A549 (cell line): ENCODE measurements at regions of chr7 and their contacts with region 1.

Region 1: DNA sequence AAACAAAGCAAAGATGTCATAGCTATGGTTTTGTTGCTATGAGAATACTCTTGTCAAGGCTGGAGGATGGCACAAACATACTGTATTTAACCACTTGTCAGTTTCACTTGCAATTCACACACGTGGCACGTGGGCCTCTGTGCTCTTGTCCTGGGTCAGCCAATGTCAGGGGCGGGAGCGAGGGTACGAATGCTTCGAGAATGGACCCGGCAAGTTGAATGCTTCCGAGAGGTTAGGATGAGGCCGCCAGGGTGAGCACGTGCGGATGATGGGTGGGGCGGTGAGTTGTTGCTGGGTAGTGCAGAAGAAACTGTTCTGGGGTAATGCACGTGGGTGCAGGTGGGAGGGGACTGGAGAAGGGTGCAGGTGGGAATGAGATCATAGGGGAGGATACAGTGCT is 10.4 kb upstream of the OCM2 start:
- DNase-seq: no peak
- ATAC-seq: no peak
- H3K4me3 ChIP-seq: no peak overlapping the region
- H3K27ac ChIP-seq: no peak overlapping the region
- H3K4me1 ChIP-seq: no peaks in the 10 kb centered on the region
- CTCF ChIP-seq: no peak
- EP300 ChIP-seq: no peak
- POLR2A ChIP-seq: no peak
- RAD21 ChIP-seq: no peak

Region 2: GRCh38 chr7:97971990-97972943 is 28.1 kb before region 1 on chr7:
- CTCF ChIA-PET with region 1: no interaction called
- POLR2A ChIA-PET with region 1: no interaction called
- DNase-seq: peak; percentile 85 to 90
- ATAC-seq: peak; percentile 98 to 99
- H3K4me3 ChIP-seq: peak overlapping the region; percentile 93
- H3K27ac ChIP-seq: peak overlapping the region; percentile 93 to 96
- H3K4me1 ChIP-seq: peaks cover 8% of the 10 kb centered on the region; the same call in 1 of the 3 replicates
- CTCF ChIP-seq: peak; percentile 37
- EP300 ChIP-seq: no peak
- POLR2A ChIP-seq: peak; percentile 59
- RAD21 ChIP-seq: no peak

Region 3: GRCh38 chr7:98014352-98014751 is 14.0 kb after region 1 on chr7:
- CTCF ChIA-PET with region 1: interaction called, 14 read pairs
- POLR2A ChIA-PET with region 1: no interaction called
- DNase-seq: no peak
- ATAC-seq: peak; percentile 27 to 63; a peak in 3 of 6 replicates
- H3K4me3 ChIP-seq: no peak overlapping the region
- H3K27ac ChIP-seq: no peak overlapping the region
- H3K4me1 ChIP-seq: no peaks in the 10 kb centered on the region
- CTCF ChIP-seq: no peak
- EP300 ChIP-seq: no peak
- POLR2A ChIP-seq: no peak
- RAD21 ChIP-seq: 0 out of 5 replicates have a peak, but pooled peaks of 1 of the 2 experiments have one; percentile 24

Region 4: GRCh38 chr7:98034081-98035035 is 34.0 kb after region 1 on chr7:
- CTCF ChIA-PET with region 1: no interaction called
- POLR2A ChIA-PET with region 1: no interaction called
- DNase-seq: no peak
- ATAC-seq: no peak
- H3K4me3 ChIP-seq: no peak overlapping the region
- H3K27ac ChIP-seq: no peak overlapping the region
- H3K4me1 ChIP-seq: no peaks in the 10 kb centered on the region
- CTCF ChIP-seq: no peak
- EP300 ChIP-seq: no peak
- POLR2A ChIP-seq: no peak
- RAD21 ChIP-seq: no peak